ENCODE measurements at regions of chr5 and their contacts with region 1.

Region 1: DNA sequence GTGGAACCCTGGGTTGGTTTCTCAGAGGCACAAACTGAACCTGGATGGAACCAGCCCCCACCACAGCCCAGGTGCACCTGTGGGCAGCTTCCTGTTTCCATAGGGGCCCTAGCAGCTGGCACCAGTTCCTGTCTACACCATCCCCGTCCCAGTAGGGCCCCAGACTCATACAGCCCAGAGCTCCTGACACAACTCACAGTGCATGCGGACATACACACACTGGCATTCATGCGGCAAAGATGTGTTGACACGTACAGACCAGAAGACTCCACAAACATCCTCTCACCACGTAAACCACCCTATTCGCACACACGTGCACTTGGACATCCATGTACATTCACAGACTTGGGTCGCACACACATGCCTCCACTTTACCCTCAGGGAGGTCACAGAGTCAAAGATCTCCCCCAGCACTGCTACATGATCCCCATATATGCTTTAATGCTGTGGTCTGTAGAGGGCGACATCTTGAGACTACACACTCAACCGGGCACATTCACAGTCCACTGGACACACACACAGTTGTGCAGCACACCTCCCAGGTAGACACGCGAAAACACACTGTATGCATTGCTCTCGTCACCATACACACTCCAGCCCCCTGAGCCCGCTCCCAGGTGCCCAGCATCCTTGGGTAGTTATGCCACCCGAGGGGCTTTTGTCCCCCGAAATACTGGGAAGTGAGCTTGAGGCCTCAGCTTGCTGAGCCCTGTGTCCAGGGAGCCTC is 22.4 kb downstream of the CXXC5 start:
- DNase-seq: peak; percentile 59
- ATAC-seq: peak; percentile 28
- H3K4me3 Mint-ChIP-seq: peak overlapping the region; percentile 84
- H3K27ac Mint-ChIP-seq: peak overlapping the region; percentile 82
- H3K4me1 Mint-ChIP-seq: peaks cover 38% of the 10 kb centered on the region
- H3K27me3 Mint-ChIP-seq: no peaks in the 10 kb centered on the region

Region 2: DNA sequence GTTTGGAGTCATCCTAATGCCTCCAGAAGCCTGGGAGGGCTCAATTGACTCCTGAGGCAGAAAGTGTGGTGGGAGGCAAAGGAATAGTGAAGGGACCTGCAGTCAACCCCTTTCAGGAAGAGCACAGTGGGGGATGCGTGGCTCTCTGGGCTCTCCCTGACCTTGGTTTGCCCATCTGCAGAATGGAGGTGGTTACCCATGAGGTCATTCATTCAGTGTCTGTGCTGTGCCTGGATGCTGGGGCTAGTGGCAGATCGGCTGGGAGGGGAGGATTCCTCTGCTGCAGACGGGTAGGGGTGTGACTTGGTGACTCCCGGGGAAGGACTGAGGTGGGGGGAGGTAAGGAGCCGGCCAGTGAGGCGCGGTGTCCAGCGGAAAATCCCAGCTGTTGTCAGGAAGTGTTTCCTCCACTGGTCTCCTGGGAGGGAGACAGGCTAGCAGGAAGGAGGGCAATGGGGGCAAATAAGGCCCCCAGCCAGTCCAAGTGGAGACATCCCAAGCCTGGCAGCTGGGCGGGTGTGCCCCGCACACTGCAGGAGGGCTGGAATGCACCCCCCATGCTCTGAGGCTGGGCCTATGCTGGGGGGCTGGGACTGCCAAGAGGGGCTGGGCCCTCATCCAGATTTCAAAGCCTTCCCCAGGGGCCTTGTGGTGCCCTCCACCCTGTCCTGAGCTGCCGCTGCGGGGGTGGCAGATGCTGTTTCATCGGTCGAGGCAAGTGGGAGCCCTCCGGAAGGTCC is 11.4 kb before region 1 on chr5:
- POLR2A ChIA-PET with region 1: interaction called, 10 read pairs
- DNase-seq: no peak
- ATAC-seq: no peak
- H3K4me3 Mint-ChIP-seq: no peak overlapping the region
- H3K27ac Mint-ChIP-seq: no peak overlapping the region
- H3K4me1 Mint-ChIP-seq: peaks cover 16% of the 10 kb centered on the region
- H3K27me3 Mint-ChIP-seq: peaks cover 2% of the 10 kb centered on the region